CD4-positive, alpha-beta T cell (primary cell): ENCODE measurements at regions of chr17 and their contacts with region 1.

Region 1: DNA sequence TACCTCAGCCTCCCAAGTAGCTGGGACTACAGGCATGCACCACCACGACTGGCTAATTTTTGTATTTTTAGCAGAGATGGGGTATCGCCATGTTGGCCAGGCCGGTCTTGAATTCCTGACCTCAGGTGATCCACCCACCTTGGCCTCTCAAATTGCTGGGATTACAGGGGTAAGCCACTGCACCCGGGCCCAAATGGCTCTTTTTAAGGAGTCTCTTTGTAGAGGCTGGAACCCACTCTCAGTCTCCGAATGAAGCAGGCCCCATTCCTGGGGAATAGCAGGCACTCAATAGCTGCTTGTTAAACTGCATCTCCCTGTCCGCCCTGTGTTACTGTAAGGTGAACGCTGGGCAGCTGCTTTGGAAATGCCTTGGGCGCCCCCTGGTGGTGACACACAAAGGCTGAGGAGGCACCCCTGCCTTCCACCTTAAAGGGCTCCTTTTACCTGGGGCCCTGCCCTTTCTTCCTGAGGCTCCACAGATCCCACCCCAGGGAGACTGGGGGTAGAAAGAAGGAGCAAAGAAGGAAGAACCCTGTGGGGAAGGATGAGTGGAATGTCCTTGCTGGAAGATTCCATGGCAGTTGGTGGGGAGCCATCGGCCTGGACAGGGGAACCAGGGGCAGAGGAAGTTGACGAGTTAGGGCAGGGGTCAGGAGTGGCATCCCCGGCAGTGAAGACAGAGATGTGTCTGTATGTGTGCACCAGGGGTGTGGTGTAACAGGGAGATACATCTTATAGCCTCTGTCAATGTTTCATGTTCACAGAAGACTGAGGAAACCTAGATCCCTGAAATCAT is 6.1 kb upstream of the SP2 start:
- DNase-seq: peak; percentile 85 to 98 (median 92)
- ATAC-seq: peak; percentile 98
- H3K4me3 ChIP-seq: no peak overlapping the region
- H3K4me3 Mint-ChIP-seq: peak overlapping the region; percentile 72
- H3K27ac ChIP-seq: no peak overlapping the region
- H3K27ac Mint-ChIP-seq: peak overlapping the region; percentile 32
- H3K4me1 ChIP-seq: peaks cover 23% of the 10 kb centered on the region
- H3K4me1 Mint-ChIP-seq: peaks cover 32% of the 10 kb centered on the region
- H3K27me3 ChIP-seq: no peaks in the 10 kb centered on the region
- H3K27me3 Mint-ChIP-seq: no peaks in the 10 kb centered on the region
- CTCF ChIP-seq: peak; percentile 94

Region 2: GRCh38 chr17:47776330-47777197 is 113.4 kb before region 1 on chr17:
- CTCF ChIA-PET with region 1: interaction called, 3 read pairs
- POLR2A ChIA-PET with region 1: no interaction called
- intact Hi-C with region 1: loop called (anchors 1 to 2 kb)
- DNase-seq: peak in 7 of 14 experiments; percentile 12 to 74 (median 50)
- ATAC-seq: peak; percentile 89
- H3K4me3 ChIP-seq: no peak overlapping the region
- H3K4me3 Mint-ChIP-seq: no peak overlapping the region
- H3K27ac ChIP-seq: no peak overlapping the region
- H3K27ac Mint-ChIP-seq: no peak overlapping the region
- H3K4me1 ChIP-seq: peaks cover 4% of the 10 kb centered on the region
- H3K4me1 Mint-ChIP-seq: peaks cover 4% of the 10 kb centered on the region
- H3K27me3 ChIP-seq: peaks cover 19 to 27% of the 10 kb centered on the region in 2 experiments
- H3K27me3 Mint-ChIP-seq: peaks cover 69% of the 10 kb centered on the region
- CTCF ChIP-seq: peak; percentile 86

Region 3: DNA sequence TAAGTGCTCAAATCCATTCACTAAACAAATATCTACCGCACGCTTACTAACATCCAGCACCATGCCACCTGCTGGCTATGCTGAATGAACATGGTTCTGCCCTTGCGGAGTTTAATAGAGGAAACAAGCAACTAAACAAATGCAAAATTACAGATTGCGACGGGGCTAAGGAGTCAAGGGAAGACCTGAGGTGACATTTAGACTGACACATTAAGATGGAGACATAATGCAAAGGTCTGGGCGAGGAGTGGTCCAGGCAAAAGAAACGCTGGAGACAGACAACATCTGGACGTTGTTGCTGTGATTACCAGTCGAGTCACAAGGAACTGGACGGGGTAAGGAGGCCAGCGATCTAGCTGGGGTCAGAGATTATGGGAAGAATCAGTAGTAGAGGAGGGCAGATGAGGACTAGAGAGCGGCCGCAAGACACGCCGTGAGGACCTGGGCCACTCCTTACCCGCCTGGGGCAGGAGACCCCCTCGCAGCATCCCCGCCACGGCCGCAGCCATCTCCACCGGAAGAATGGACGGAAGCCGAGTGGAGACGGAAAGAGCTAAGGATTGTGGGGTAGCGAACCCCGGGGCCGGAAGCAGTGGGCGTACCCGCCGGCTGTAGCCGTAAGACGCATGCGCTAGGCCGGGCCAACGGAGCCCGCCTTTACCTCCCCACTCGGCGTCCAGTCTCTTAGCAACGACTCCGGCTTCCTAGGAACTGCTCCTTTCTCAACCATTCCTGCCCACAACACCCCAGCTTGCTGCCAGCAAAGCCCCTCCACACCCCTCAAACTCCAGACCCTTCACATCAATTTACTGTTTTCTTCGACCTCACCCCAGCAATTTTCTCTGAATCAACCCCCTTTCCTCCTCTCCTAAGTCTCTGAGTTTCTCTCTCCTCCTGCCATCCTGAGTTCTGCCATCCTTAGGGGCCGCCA is 58.7 kb before region 1 on chr17 and contains the starts of genes LRRC46 and MRPL10:
- CTCF ChIA-PET with region 1: interaction called, 9 read pairs
- POLR2A ChIA-PET with region 1: interaction called, 53 read pairs
- intact Hi-C with region 1: loop called in 1 of 2 experiments (anchors 2 kb)
- DNase-seq: peak; percentile 84 to 95 (median 88)
- ATAC-seq: peak; percentile 86
- H3K4me3 ChIP-seq: peak within 1 kb of the TSS; percentile 92
- H3K4me3 Mint-ChIP-seq: peak within 1 kb of the TSS; percentile 89
- H3K27ac ChIP-seq: peak within 1 kb of the TSS; percentile 78 to 90
- H3K27ac Mint-ChIP-seq: peak within 1 kb of the TSS; percentile 78
- H3K4me1 ChIP-seq: peaks cover 66% of the 10 kb centered on the region
- H3K4me1 Mint-ChIP-seq: peaks cover 58% of the 10 kb centered on the region
- H3K27me3 ChIP-seq: no peaks in the 10 kb centered on the region
- H3K27me3 Mint-ChIP-seq: no peaks in the 10 kb centered on the region
- CTCF ChIP-seq: no peak
- total RNA-seq, gene LRRC46: 0.42 to 0.85 TPM
- total RNA-seq, gene MRPL10: 49.0 to 51.4 TPM

Region 4: DNA sequence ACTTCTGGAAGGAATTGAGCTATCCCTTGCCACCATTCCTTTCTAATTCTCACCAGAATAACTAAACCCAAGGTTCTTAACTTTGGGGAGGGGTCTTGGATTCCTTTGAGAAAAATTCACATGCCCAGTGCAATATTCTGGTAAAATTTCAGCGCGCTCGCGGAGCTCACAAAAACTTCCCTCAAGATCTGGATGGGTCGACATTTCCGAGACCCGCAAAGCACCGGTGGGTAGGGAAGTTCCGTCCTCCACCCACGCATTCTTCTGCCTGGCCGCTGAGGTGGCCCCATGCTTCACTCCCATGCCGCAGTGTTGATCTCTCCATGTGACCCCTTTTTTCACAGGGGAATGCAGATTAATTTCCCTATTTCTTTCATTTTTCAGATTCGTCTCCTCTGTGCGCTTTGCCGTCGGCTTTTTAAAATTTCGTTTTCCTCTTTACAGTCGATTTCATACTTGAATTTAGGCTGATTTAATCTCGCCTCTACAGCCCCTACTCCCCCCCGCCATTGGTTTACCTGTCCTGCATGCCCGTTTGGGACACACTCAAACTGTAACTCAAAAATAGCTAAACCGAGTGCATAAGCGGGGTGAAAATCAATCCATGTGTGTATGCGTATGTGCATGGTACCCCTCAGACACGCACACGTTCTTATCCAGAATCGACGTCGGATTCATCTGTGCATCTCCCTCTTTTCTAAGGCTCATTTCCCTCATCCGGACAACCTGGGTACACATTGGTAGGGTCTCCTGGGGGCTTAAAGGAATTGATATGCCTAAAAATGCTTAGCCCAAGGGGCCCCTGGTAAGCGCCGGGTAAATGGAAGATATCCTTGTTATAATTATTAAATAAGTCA is 37.6 kb before region 1 on chr17:
- CTCF ChIA-PET with region 1: interaction called, 86 read pairs
- POLR2A ChIA-PET with region 1: interaction called, 9 read pairs
- intact Hi-C with region 1: no loop called
- DNase-seq: peak in 1 of 14 experiments; percentile 27
- ATAC-seq: no peak
- H3K4me3 ChIP-seq: no peak overlapping the region
- H3K4me3 Mint-ChIP-seq: peak overlapping the region; percentile 65
- H3K27ac ChIP-seq: no peak overlapping the region
- H3K27ac Mint-ChIP-seq: no peak overlapping the region
- H3K4me1 ChIP-seq: peaks cover 35% of the 10 kb centered on the region
- H3K4me1 Mint-ChIP-seq: peaks cover 17% of the 10 kb centered on the region
- H3K27me3 ChIP-seq: peaks cover 59 to 74% of the 10 kb centered on the region in 2 experiments
- H3K27me3 Mint-ChIP-seq: peaks cover 83% of the 10 kb centered on the region
- CTCF ChIP-seq: no peak

Region 5: DNA sequence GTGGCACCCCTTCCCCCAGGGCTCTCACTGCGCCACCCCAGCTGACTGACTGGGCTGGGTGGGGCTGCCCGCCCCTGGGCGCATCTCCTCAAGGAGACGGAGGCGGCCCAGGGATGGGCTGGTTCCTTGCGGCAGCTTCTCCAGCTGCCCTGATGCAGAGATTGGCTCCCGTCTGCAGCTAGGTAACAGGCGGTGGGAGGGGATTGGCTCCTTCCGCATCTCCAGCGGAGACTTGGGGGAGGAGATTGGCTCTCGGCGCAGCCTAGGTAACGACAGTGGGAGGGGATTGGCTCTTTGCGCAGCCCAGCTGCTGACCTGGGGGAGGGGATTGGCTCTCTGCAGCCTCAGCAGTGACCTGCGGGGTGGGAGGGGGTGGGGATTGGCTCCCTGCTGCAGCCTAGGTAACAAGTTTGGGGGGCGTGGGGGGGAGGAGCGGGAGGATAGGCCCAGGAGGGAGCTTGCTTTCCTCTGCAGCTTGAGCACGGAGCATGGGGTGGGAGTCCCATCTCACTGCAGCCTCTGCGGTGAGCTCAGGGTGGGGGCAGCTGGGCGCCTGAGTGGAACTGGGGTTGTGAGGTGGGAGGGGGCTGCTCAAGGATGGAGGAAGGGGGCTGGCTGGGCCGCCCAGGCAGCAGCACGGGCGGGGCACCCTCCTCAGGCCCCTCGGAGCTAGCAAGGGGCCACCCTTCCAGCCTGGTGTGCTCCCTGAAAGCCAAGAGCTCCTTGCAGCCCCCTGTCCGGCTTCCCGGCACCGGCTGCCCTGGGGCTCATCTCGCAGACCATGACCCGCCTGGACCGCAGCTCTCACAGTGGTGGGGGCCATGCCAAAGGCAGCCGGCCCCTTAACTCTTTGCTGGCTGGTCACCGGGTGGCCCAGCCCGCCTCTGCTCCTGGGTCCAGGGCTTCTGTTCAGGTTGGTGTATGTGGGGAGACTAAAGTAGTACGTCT is 164.6 kb after region 1 on chr17:
- CTCF ChIA-PET with region 1: no interaction called
- POLR2A ChIA-PET with region 1: no interaction called
- intact Hi-C with region 1: no loop called
- DNase-seq: no peak
- ATAC-seq: no peak
- H3K4me3 ChIP-seq: no peak overlapping the region
- H3K4me3 Mint-ChIP-seq: no peak overlapping the region
- H3K27ac ChIP-seq: no peak overlapping the region
- H3K27ac Mint-ChIP-seq: no peak overlapping the region
- H3K4me1 ChIP-seq: peaks cover 52% of the 10 kb centered on the region
- H3K4me1 Mint-ChIP-seq: peaks cover 42% of the 10 kb centered on the region
- H3K27me3 ChIP-seq: no peaks in the 10 kb centered on the region
- H3K27me3 Mint-ChIP-seq: no peaks in the 10 kb centered on the region
- CTCF ChIP-seq: no peak